ENCODE measurements at regions of chr9 and their contacts with region 1.

Region 1: DNA sequence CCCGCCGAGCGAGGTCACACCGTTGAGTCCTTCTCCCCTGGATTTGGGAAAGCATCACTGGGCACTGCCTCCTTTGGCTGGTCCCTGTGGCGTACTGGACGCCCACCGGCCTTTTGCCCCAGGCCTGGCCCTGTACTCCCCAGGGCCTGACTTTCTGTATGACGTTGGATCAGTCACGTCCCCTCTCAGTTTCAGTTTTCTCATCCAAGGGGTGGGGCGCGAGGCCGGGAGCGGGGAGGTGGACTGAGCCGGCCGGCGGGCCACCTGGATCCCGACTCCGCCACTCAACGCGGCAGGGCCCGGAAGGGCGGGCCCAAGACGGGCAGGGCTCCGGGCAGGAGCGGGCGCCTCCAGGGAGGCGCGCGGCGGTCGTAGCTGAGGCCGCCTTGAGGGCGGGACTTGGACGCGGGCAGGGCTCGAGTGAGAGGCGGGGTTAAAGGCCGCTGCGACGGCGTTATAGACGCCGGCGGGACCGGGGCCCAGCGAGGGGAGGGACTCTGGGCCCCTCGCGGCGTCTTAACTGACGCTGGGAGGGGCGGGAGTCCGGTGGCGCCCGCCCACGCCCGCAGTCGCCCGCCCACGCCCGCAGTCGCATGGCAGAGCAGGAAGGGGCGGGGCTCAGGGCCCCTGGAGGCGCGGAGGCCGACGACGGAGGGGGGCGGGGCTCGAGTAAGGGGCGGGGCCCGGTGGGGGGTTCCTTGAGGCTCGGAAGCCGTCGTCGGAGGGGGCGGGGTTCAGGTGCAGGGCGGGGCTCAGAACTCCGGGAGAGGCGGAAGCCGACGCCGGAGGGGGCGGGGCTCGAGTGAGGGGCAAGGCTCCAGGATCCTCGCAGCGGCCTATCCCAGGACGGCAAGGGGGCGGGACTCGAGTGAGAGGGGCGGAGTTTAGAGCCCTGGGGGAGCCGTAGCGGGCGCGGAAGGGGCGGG is 549 bp upstream of the CARD19 start:
- DNase-seq: peak; percentile 99
- H3K4me3 ChIP-seq: peak overlapping the region in 2 of 3 experiments; percentile 18 to 83
- H3K27ac ChIP-seq: peak overlapping the region; percentile 69
- H3K4me1 ChIP-seq: peaks cover 34% of the 10 kb centered on the region
- H3K27me3 ChIP-seq: no peaks in the 10 kb centered on the region
- CTCF ChIP-seq: no peak
- POLR2A ChIP-seq: peak; percentile 47

Region 2: GRCh38 chr9:92669890-92670708 is 425.4 kb before region 1 on chr9 and contains the start of gene IPPK:
- CTCF ChIA-PET with region 1: no interaction called
- POLR2A ChIA-PET with region 1: interaction called, 3 read pairs
- dilution Hi-C with region 1: no loop called
- intact Hi-C with region 1: loop called (anchors 10 kb)
- DNase-seq: peak; percentile 98
- H3K4me3 ChIP-seq: peak within 1 kb of the TSS; percentile 50 to 83 (median 77)
- H3K27ac ChIP-seq: peak within 1 kb of the TSS; percentile 97
- H3K4me1 ChIP-seq: peaks cover 16% of the 10 kb centered on the region
- H3K27me3 ChIP-seq: no peaks in the 10 kb centered on the region
- CTCF ChIP-seq: no peak
- POLR2A ChIP-seq: peak; percentile 88
- total RNA-seq, gene IPPK: 12.5 and 14.0 TPM in 2 replicates

Region 3: GRCh38 chr9:93003552-93004407 is 91.7 kb before region 1 on chr9:
- CTCF ChIA-PET with region 1: no interaction called
- POLR2A ChIA-PET with region 1: no interaction called
- dilution Hi-C with region 1: no loop called
- intact Hi-C with region 1: loop called (anchors 1 kb)
- DNase-seq: peak; percentile 59
- H3K4me3 ChIP-seq: no peak overlapping the region
- H3K27ac ChIP-seq: no peak overlapping the region
- H3K4me1 ChIP-seq: no peaks in the 10 kb centered on the region
- H3K27me3 ChIP-seq: peaks cover 0 to 4% of the 10 kb centered on the region in 2 experiments
- CTCF ChIP-seq: peak; percentile 62 to 69
- POLR2A ChIP-seq: no peak

Region 4: GRCh38 chr9:93108291-93109041 is 13.0 kb after region 1 on chr9:
- CTCF ChIA-PET with region 1: interaction called, 26 read pairs
- POLR2A ChIA-PET with region 1: no interaction called
- dilution Hi-C with region 1: no loop called
- intact Hi-C with region 1: loop called (anchors 1 kb)
- DNase-seq: no peak
- H3K4me3 ChIP-seq: no peak overlapping the region
- H3K27ac ChIP-seq: no peak overlapping the region
- H3K4me1 ChIP-seq: no peaks in the 10 kb centered on the region
- H3K27me3 ChIP-seq: no peaks in the 10 kb centered on the region
- CTCF ChIP-seq: no peak
- POLR2A ChIP-seq: no peak

Region 5: DNA sequence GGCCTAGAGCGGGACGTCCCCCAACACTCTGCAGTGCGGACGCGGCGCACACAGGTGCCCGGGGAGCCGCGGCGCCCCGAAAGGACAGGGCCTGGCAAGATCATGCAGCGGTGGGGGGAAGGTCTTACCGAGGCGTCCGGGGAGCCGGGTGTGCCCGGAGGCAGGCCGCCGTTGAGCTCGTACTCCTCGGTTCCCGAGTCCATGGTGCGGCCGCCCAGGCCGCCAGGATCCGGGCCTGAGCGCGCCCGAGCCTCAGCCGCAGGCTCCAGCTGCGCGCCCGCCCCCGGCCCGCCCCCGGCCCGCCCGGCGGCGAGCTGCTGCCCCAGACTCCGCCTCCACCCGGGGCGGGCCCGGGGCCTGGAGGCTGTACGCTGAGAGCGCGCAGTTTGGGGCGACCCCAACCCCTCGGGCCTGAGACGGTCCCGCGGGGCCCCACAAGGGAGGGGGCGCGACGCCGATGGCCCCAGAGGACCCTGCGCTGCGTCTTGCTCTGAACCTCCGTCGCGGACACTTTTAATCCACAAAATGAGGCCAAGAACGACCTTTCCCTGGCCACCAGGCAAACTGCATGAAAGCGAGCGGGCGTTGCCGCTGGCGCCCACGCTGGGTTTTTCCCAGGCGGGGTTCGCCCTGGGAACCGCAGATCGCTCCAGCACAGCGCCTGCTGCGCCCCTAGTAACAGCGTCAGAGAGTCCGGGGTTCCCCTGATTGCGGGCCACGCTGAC is 38.7 kb after region 1 on chr9 and contains the start of gene NINJ1:
- CTCF ChIA-PET with region 1: interaction called, 5 read pairs
- POLR2A ChIA-PET with region 1: interaction called, 8 read pairs
- dilution Hi-C with region 1: no loop called
- intact Hi-C with region 1: loop called (anchors 1 kb)
- DNase-seq: peak; percentile 83
- H3K4me3 ChIP-seq: peak within 1 kb of the TSS; percentile 54 to 63 (median 58)
- H3K27ac ChIP-seq: peak within 1 kb of the TSS; percentile 75
- H3K4me1 ChIP-seq: peaks cover 49% of the 10 kb centered on the region
- H3K27me3 ChIP-seq: no peaks in the 10 kb centered on the region
- CTCF ChIP-seq: peak in 1 of 2 donors; percentile 5
- POLR2A ChIP-seq: peak; percentile 77
- total RNA-seq, gene NINJ1: 31.5 and 42.2 TPM in 2 replicates

Region 6: DNA sequence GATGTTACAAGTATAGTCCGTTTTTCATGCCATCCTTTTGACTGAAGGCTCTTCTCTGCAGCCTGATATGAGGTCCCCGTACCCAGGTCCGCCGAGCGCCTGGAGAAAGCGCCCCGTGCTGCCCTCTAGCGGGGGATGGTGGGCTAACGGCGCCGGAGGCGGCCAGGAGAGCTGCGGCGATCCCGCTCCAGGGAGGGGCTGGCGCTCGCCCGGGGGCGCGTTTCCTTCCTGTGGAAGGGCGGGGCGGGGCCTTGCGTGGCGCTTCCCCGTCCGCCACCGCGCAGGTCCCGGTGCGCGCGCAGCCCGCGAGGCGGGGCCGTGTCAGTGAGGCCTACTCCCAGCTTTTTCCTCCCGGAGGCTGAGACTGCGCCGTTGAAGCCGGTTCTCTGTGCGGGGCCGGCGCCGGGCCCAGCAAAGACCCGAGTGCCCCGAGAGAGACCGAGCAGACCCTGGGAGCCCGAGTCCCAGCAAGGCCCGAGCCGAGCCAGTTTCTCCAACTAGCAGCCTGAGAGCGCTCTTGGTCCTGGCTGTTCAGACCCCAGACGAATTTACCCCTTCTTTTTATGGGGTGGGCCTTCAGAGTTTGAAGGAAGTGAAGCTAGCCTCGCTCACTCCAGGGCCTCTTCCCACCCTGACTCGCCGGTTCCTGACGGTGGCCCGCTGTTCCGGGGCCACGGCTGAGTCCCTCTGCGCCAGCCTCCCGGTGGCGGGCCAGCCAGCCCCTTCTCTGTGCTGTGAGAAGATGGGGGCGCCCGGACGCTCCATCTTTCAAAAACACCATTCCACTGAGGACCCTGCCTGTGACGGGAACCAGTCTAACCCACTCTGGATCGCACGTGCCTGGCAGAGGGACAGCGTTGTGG is 471.2 kb after region 1 on chr9:
- CTCF ChIA-PET with region 1: interaction called, 4 read pairs
- POLR2A ChIA-PET with region 1: no interaction called
- dilution Hi-C with region 1: no loop called
- intact Hi-C with region 1: loop called (anchors 5 kb)
- DNase-seq: peak; percentile 98
- H3K4me3 ChIP-seq: peak overlapping the region; percentile 49 to 64 (median 52)
- H3K27ac ChIP-seq: peak overlapping the region; percentile 84
- H3K4me1 ChIP-seq: peaks cover 16% of the 10 kb centered on the region
- H3K27me3 ChIP-seq: no peaks in the 10 kb centered on the region
- CTCF ChIP-seq: peak; percentile 97 to 99
- POLR2A ChIP-seq: peak; percentile 98

Measured in endothelial cell of umbilical vein (primary cell).